ENCODE measurements at regions of chr2 and their contacts with region 1.

Region 1: DNA sequence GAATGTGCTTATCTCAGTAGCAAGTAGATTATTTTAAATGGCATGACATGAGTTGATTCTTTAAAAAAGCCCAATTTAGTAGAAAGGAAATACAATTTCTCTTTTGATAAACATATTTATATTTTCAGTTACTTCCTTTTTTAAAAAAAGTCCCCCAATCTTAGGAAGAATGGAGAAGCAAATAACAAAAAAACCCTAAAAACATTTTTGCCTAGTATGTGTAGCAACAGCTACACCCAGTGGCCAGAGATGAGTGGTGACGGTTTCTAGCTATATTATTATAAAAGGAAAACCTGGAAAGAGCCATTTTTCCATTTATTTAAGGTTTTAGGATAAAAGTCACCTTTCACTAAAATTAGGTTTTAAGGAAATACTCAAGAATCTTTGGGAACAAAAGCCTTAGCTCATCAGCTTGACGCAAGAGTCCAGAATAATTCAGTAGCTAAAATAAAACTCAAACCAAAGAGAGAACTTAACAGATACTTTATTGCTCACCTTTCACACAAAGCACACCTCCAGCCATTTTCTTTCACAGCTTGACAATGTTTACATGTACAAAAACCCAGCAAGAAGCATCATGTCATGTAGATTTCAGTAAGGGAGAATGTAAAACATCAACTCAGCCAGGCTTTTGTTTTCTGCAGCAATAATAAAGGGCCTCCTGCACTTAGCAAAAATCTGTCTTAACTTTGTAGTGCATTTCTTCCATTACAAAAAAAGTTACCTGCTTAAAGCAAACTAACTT is 15.7 kb downstream of the FAM98A start:
- DNase-seq: peak; percentile 25
- H3K4me3 Mint-ChIP-seq: no peak overlapping the region
- H3K27ac Mint-ChIP-seq: no peak overlapping the region
- H3K4me1 Mint-ChIP-seq: peaks cover 10% of the 10 kb centered on the region
- H3K27me3 Mint-ChIP-seq: no peaks in the 10 kb centered on the region

Region 2: DNA sequence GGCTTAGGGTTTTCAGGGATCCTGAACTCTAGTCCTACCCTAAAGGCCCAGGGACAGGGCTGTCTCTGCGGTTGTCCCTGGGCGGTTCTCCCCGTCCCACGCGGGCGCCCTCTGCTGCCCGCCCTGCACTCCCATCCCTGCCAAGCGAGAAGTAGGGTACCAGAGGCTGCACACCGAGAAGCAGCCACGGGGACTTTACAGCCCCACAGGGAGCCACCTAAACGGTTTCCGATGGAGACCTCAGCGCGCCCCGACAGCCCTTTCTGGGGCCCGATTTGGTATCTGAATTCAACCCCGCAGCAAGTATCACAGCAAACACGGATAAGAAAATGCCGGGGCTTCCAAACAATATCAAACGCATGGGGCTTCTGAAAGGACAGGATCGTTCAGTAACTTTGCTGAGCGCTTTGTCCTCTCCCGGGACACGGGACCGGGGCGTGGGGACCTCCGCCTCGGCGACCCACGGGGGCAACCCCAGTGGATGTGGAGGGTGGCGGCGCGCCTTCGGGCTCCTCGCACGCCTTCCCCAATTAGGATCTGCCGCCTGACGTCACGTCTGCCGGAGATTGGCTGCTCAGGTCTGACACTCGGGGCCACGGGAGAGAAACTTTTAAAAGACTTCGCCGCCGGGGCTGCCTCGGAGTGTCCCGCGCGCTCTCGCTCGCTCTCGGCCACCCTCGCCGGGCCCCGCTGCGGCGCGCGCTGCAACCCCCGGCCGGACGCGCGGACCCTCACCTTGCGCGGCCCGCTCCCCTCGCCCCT is 636.9 kb before region 1 on chr2 and contains the start of gene LTBP1:
- CTCF ChIA-PET with region 1: no interaction called
- POLR2A ChIA-PET with region 1: no interaction called
- intact Hi-C with region 1: loop called (anchors 10 kb)
- DNase-seq: peak; percentile 72
- H3K4me3 Mint-ChIP-seq: peak within 1 kb of the TSS; percentile 74
- H3K27ac Mint-ChIP-seq: no peak within 1 kb of the TSS
- H3K4me1 Mint-ChIP-seq: peaks cover under 1% of the 10 kb centered on the region
- H3K27me3 Mint-ChIP-seq: peaks cover 9% of the 10 kb centered on the region
- total RNA-seq, gene LTBP1: 0.10 to 0.27 TPM

Region 3: DNA sequence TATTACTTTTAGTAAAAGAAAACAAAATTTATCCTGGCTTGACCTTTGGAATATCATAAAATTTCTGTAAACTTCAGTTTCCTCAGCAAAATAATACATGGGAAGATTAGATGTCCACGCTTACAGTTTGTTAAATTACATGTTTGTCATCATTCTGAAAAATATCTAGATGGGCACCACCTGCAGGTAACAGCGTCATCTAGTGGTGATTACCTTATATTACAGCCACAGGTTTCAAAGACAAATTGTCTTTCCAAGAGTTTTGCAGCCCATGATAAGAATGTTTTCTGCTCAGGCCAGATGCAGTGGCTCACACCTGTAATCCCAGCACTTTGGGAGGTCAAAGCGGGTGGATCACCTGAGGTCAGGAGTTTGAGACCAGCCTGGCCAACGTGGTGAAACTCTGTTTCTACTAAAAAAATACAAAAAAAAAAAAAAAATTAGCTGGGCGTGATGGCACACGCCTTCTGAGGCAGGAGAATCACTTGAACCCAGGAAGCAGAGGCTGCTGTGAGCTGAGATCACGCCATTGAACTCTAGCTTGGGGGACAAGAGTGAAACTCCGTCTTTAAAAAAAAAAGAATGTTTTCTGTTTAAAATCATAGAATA is 203.3 kb before region 1 on chr2:
- CTCF ChIA-PET with region 1: interaction called, 24 read pairs
- POLR2A ChIA-PET with region 1: no interaction called
- intact Hi-C with region 1: loop called (anchors 5 kb)
- DNase-seq: no peak
- H3K4me3 Mint-ChIP-seq: no peak overlapping the region
- H3K27ac Mint-ChIP-seq: no peak overlapping the region
- H3K4me1 Mint-ChIP-seq: no peaks in the 10 kb centered on the region
- H3K27me3 Mint-ChIP-seq: peaks cover 14% of the 10 kb centered on the region

Region 4: DNA sequence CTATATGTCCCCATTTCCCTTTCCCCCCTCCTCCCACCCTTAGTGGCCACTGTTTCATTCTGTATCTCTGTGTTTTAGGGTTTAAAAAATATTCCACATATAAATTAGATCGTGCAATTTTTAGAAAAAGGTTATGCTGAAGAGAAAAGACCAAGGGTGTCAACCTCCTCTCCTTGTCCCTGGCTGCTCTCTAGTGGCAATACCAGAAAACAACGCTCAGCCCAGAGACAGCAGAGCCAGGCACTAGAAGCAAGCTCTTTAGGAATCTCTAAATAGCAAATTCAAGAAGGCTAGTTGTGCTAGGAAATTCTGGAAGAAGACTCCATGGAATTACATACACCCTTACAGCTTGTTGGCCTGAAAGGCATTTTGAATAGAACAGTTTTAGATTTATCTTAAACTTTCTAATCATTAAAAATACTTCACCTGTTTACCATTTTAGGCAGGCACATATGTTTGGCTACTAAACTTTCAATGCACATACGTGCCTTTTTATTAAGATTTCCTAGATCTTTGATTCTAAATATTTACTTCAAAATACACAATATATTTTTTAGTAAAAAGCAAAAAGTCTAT is 142.0 kb before region 1 on chr2:
- CTCF ChIA-PET with region 1: interaction called, 14 read pairs
- POLR2A ChIA-PET with region 1: no interaction called
- intact Hi-C with region 1: no loop called
- DNase-seq: peak; percentile 25
- H3K4me3 Mint-ChIP-seq: no peak overlapping the region
- H3K27ac Mint-ChIP-seq: no peak overlapping the region
- H3K4me1 Mint-ChIP-seq: no peaks in the 10 kb centered on the region
- H3K27me3 Mint-ChIP-seq: peaks cover 5% of the 10 kb centered on the region

Region 5: DNA sequence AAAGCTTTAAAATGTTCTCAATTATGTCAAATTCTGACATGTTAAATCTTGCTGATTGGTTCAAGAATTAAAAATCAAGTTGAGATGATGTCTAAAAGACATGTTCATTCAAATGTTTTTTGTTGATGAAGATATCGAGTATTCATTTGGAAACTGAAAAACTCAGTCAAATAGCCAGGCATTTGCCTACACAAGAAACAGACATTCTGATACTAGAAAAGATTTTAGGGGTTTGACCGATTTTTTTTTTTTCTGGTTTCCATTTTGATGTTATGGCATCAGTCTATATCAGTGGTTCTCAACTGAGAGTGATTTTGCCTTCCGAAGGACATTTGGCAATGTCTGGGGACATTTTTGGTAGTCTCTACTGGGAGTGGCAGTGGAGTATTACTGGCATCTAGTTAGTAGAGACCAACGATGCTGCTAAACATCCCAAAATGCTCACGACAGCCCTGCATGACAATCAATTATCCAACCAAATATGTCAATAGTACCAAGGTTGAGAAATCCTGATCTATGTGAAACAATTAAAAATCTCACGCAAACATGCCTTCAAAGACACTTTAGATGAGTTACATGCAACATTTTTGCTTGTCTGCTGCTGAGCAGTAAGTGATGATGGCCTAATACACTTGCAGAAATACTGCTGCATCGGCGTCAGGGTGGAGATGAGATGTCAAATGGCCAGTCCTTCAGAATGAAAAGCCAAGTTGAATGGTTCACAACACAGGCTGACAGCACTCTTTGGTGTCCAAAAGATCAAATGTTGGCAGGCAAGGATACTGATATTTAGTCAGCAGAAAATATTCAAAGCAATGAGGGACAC is 94.4 kb before region 1 on chr2:
- CTCF ChIA-PET with region 1: interaction called, 6 read pairs
- POLR2A ChIA-PET with region 1: no interaction called
- intact Hi-C with region 1: loop called (anchors 1 kb)
- DNase-seq: no peak
- H3K4me3 Mint-ChIP-seq: no peak overlapping the region
- H3K27ac Mint-ChIP-seq: peak overlapping the region; percentile 66
- H3K4me1 Mint-ChIP-seq: peaks cover 37% of the 10 kb centered on the region
- H3K27me3 Mint-ChIP-seq: peaks cover 13% of the 10 kb centered on the region

Region 6: GRCh38 chr2:34012715-34013302 is 429.4 kb after region 1 on chr2:
- CTCF ChIA-PET with region 1: no interaction called
- POLR2A ChIA-PET with region 1: no interaction called
- intact Hi-C with region 1: no loop called
- DNase-seq: peak; percentile 45
- H3K4me3 Mint-ChIP-seq: no peak overlapping the region
- H3K27ac Mint-ChIP-seq: no peak overlapping the region
- H3K4me1 Mint-ChIP-seq: no peaks in the 10 kb centered on the region
- H3K27me3 Mint-ChIP-seq: peaks cover 1% of the 10 kb centered on the region

Measured in activated CD4-positive, alpha-beta memory T cell treated with anti-CD3 and anti-CD28 coated beads for 36 hours (primary cell).